HEK293 (cell line): ENCODE measurements at regions of chr6 and their contacts with region 1.

Region 1: GRCh38 chr6:139364302-139364981 is 10.0 kb downstream of the CITED2 start:
- H3K4me3 ChIP-seq: no peak overlapping the region
- H3K27ac ChIP-seq: no peak overlapping the region
- H3K4me1 ChIP-seq: peaks cover 15% of the 10 kb centered on the region
- CTCF ChIP-seq: 0 out of 2 replicates have a peak, but pooled peaks have one; percentile 28

Region 2: DNA sequence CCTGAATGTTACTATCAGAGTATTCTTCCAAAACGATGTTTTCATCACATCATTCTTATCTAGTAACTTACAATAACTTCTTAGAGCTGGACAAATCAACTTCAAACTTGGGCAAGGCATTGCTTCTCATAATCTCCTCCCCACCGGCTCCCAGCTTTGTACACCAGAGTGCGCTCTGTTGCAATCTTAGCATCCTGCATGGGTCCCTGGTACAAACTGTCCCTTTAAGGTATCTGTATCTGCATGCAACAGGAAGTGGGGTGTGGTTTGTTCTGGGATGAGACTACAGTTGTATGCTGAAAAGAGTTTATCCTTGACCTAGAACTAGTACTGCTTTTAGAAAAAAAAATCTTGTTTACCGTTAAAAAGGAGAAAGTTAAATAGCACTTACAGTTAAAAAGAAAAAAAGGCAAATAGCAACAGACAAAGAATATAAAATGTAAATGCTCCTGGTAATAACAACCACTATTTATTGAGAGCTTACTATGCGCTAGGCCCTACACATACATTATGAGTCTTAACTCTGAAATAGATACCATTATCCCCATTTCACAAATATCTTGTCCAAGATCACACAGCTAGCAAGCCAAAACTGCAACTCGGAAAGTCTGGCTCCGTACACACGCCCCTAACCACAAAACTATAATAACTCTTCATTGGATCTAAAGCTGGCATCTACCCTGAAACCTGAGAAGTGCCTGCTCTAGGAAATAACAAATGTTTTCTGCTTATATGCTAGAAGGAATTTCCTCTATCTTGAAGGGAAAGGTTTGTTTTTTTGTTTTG is 239.4 kb before region 1 on chr6:
- CTCF ChIA-PET with region 1: interaction called, 13 read pairs
- POLR2A ChIA-PET with region 1: no interaction called
- H3K4me3 ChIP-seq: no peak overlapping the region
- H3K27ac ChIP-seq: no peak overlapping the region
- H3K4me1 ChIP-seq: peaks cover 3% of the 10 kb centered on the region
- CTCF ChIP-seq: peak; percentile 42; the same call in 1 of the 2 replicates

Region 3: GRCh38 chr6:139219271-139219729 is 145.1 kb before region 1 on chr6:
- CTCF ChIA-PET with region 1: interaction called, 86 read pairs
- POLR2A ChIA-PET with region 1: interaction called, 6 read pairs
- H3K4me3 ChIP-seq: no peak overlapping the region
- H3K27ac ChIP-seq: no peak overlapping the region
- H3K4me1 ChIP-seq: no peaks in the 10 kb centered on the region
- CTCF ChIP-seq: peak; percentile 88

Region 4: DNA sequence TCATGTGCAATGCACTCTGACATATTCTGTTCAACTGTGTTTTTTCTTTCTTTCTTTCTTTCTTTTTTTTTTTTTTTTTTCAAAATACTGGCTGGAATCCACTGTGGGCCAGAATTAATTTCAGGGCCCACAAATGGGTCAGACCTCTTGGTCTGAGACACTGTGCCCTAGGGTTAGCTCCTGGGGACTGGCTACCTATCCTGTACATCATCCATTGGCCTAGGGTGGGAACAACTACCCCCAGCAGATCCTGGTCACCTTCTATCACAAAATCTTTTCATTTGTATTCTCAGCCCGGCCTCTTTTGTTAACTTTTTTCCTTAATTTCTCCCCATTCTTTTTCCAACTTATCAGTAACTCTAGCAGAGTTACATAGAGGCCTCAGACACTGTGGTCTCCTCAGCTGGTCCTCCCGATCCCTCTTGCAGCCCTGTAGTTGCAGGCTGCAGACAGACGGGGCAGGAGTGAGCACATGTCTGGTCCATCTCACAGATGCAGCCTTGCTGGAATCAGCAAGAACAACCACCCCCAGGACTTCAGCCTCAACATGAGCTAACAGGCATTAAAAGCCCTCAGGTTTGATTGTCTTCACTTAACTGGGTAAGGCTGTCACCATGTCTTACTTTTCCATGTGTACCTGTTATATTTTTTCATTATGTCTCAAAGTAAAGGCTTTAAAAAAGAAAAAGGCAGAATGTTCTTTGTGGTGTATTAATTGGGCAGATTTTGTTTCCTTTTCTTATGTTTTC is 114.0 kb before region 1 on chr6:
- CTCF ChIA-PET with region 1: interaction called, 14 read pairs
- POLR2A ChIA-PET with region 1: no interaction called
- H3K4me3 ChIP-seq: no peak overlapping the region
- H3K27ac ChIP-seq: no peak overlapping the region
- H3K4me1 ChIP-seq: no peaks in the 10 kb centered on the region
- CTCF ChIP-seq: peak; percentile 41; the same call in 1 of the 2 replicates

Region 5: GRCh38 chr6:139291813-139292619 is 72.4 kb before region 1 on chr6 and contains the start of gene TXLNB:
- CTCF ChIA-PET with region 1: no interaction called
- POLR2A ChIA-PET with region 1: no interaction called
- H3K4me3 ChIP-seq: peak within 1 kb of the TSS; percentile 5
- H3K27ac ChIP-seq: no peak within 1 kb of the TSS
- H3K4me1 ChIP-seq: peaks cover 9% of the 10 kb centered on the region
- CTCF ChIP-seq: peak; percentile 51

Region 6: DNA sequence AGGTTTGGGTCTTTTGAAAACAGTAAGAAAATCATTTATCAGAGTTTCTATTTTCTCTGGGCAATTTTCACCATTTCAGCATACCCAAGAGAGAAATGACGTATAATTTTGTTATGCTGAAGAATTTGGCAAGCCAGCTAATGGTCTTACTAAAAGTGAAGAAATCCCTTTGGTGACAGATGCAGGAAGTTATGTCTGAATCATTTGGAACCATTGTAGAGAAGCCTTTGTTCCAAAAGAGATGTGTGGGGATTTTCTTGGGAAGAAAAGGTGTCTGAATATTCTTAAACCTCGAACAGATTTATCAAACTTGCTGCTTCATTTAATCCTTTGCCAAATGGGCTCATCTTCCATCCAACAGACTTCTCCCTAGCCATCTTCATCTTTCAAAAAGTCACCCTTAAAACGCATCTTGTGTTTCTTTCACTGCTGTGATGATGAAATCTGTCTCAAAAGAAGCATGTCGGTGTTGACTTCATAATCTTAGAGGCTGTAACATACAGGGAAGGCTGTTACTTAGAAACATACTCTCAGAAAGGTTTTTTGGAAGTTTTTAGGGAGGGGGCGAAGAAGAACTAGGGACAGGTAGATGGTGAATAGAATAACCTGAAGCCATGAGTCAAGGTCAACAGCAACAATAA is 29.5 kb before region 1 on chr6:
- CTCF ChIA-PET with region 1: no interaction called
- POLR2A ChIA-PET with region 1: no interaction called
- H3K4me3 ChIP-seq: no peak overlapping the region
- H3K27ac ChIP-seq: no peak overlapping the region
- H3K4me1 ChIP-seq: no peaks in the 10 kb centered on the region
- CTCF ChIP-seq: no peak

Region 7: DNA sequence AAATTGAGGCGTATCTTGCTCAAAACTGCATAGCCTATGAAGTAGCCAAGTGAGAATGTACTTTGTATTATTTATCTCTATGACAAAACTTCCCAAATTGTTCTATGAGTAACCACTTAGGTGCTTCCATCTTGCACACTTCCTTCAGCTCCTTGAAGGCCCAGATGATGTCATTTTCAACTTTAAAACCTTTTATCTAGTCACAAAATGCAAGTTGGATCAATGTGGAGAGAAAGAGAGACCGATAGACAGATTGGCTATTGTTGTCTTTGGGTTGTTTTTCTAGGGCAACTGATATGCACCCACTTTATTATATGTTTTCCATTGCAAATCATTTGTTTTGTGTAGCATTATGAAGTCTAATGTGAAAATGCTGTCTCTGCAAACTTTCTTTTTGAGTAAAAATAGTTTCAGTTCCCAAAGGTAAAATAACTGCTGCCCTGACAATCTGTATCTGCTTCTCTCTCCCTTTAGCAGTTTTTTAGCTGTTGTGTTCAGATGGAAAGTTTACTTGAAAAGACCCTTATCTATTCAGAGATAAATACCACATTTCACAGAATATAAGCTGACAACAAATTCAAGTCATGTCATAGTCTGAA is 83.7 kb after region 1 on chr6:
- CTCF ChIA-PET with region 1: no interaction called
- POLR2A ChIA-PET with region 1: no interaction called
- H3K4me3 ChIP-seq: no peak overlapping the region
- H3K27ac ChIP-seq: no peak overlapping the region
- H3K4me1 ChIP-seq: no peaks in the 10 kb centered on the region; the same call in 1 of the 2 replicates
- CTCF ChIP-seq: no peak